Left colon (tissue), 2 donors: ENCODE measurements at regions of chr11 and their contacts with region 1.

Region 1: GRCh38 chr11:75241036-75241905 is 697 bp downstream of the TPBGL start:
- DNase-seq: peak; percentile 65 to 85
- ATAC-seq: peak; percentile 96

Region 2: DNA sequence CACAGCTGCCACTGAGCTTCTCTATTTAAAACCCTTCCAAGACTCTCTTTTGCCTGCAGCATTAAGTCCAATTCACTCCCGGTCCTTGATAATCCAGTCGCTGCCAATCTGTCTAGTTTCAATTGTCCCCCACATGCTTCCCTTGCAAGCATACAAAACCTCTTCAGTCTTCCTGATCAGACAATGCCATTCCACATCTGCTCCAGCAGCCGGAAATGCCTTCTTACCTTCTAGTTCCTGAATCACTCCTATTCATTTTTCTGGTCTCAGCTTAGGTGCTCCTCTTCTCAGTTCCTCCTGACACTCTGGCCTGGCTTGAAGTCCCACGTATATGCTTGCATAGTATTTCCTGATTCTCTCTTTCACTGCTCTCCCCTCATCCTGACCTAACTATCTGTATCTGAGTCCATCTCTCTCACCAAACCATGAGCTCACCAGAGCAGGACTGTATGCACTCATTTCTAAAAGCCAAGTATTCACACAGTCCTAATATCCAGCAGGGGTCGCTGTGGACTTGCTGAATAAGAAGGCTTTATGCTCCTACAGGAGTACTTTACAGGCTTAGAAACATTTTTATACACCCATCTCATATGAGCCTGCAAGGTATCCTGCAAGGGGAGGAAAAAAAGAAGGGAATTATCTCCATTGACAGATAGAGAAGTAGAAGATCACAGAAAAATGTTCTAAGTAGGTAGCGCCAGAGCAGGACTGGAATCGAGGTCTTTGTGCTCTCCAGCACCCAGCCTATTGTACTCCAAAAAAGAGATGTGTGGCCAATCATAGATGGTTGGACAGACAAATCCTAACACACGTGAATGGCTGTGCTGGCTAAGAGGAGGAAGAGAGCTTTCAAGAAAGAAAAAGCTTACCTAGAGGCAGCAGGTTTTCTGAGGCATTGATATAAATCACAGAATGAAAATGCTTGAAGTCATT is 311.6 kb before region 1 on chr11:
- intact Hi-C with region 1: loop called in 1 of 2 experiments (anchors 10 kb)
- DNase-seq: peak; percentile 51 to 80
- ATAC-seq: peak; percentile 83

Region 3: DNA sequence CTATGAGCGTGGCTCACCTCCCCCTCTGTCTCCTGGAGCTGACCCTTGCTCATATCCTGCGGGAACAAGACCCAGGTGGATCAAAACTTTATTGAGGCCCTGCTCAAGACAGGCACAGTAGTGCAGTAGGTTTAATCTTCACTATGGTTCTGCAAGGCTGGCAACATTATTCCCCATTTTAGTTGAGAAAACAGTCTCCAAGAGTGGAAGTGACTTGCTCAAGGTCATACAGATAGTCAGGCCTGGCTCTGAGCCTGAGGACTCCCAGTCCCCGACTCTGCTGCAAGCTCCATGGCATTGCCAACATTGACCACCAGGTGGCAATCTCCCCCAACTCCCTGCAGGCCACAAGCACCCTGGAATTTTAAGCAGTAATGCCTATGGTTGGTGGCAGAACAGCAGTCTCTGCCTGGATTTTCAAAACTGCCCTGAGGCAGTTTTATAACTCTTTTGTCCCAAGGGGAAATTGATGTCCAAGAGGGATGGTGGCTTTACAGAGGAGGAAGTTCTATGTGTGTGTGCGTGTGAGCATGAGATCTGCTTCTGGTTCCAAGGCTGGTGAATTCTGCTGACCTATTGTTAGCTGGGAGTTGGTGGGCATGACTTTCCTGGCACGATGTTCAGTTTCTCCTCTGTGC is 218.4 kb before region 1 on chr11:
- intact Hi-C with region 1: loop called (anchors 10 kb)
- DNase-seq: peak; percentile 51 to 82
- ATAC-seq: peak; percentile 94

Region 4: GRCh38 chr11:75142714-75143419 is 98.4 kb before region 1 on chr11:
- intact Hi-C with region 1: loop called (anchors 5 kb)
- DNase-seq: peak; percentile 76 to 80
- ATAC-seq: peak; percentile 70

Region 5: GRCh38 chr11:75445315-75445953 is 204.2 kb after region 1 on chr11:
- intact Hi-C with region 1: no loop called
- DNase-seq: peak in 1 of 2 donors; percentile 81
- ATAC-seq: peak; percentile 81